HEK293 (cell line): ENCODE measurements at regions of chr12 and their contacts with region 1.

Region 1: DNA sequence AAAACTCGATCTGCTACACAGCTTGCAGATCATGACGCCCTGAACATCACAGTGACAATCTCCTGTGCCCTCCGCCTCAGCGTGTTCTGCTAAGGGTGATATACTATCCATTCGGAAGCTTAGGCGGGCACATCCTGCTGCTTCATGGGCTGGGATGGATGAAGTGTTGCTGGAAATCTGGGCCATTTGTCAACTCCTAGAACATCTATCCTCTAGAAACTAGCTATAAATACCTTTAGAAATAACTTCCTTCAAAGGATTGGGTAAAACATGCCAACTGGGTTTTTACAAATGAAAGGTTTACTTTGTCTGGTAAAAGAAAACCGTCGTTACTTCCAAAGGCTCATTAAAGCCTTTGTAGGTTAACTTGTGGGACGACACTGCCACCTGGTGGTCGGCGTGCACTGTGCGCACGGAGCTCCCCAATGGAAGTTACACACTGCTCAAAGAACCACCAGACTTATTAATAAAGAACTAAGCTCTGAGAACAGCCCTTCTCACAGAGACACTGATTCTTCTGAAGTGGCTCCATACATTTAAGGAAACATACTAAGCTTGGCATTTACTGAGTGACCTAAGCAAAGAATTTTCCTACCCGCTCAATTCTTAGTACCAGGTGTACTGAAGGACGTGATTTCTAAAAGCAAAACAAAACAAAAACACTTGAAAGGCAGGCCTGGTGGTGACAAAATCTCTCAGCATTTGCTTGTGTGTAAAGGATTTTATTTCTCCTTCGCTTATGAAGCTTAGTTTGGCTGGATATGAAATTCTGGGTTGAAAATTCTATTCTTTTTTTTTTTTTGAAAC is 21.6 kb upstream of the CACNA2D4 start:
- H3K4me3 ChIP-seq: no peak overlapping the region
- H3K27ac ChIP-seq: no peak overlapping the region
- H3K4me1 ChIP-seq: no peaks in the 10 kb centered on the region
- CTCF ChIP-seq: peak; percentile 74

Region 2: GRCh38 chr12:1650260-1650977 is 289.6 kb before region 1 on chr12:
- CTCF ChIA-PET with region 1: interaction called, 95 read pairs
- POLR2A ChIA-PET with region 1: interaction called, 3 read pairs
- H3K4me3 ChIP-seq: no peak overlapping the region
- H3K27ac ChIP-seq: no peak overlapping the region
- H3K4me1 ChIP-seq: no peaks in the 10 kb centered on the region
- CTCF ChIP-seq: no peak

Region 3: GRCh38 chr12:1795785-1796514 is 144.1 kb before region 1 on chr12:
- CTCF ChIA-PET with region 1: interaction called, 53 read pairs
- POLR2A ChIA-PET with region 1: interaction called, 6 read pairs
- H3K4me3 ChIP-seq: peak overlapping the region; percentile 22
- H3K27ac ChIP-seq: no peak overlapping the region
- H3K4me1 ChIP-seq: no peaks in the 10 kb centered on the region; the same call in 1 of the 2 replicates
- CTCF ChIP-seq: peak; percentile 79

Region 4: DNA sequence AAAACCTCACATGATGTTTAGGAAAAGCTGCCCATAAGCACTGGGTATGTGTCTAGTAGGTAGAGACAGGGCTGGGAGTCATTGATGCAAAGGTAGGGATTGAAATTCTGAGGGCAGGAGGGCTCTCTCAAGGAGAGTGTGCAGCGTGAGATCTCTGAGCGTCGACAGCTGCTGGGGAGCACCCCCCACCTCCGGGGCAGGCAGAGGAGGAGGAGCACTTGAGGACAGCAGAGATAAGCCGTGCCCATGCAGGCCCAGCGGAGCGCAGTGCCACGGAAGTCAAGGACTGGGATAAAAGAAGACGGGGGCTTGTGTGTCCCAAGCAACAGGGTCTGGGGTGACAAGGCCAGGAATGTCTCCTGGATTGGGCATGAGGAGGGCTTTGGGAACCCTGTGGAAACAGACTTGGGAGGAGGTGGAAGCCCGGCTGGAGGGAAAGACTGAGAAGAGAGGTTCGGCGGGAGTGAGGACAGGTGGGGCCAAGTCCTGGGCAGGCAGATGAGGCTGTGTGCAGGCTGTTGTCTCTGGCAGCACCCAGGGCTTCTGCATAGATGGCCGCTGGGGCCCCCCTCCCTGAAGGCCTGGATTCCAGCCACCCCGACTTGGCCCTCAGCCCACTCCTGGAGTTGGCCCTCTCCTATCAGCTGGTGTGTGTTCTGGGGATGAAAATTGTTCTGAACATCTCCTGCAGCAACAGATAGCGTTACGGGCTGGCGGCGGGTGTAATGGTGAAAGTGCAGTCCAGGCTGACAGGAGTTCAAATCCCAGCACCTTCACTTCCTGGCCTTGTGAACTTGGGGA is 23.4 kb before region 1 on chr12:
- CTCF ChIA-PET with region 1: interaction called, 16 read pairs
- POLR2A ChIA-PET with region 1: no interaction called
- H3K4me3 ChIP-seq: no peak overlapping the region
- H3K27ac ChIP-seq: no peak overlapping the region
- H3K4me1 ChIP-seq: no peaks in the 10 kb centered on the region
- CTCF ChIP-seq: no peak

Region 5: GRCh38 chr12:1956716-1957115 is 16.7 kb after region 1 on chr12:
- CTCF ChIA-PET with region 1: interaction called, 32 read pairs
- POLR2A ChIA-PET with region 1: no interaction called
- H3K4me3 ChIP-seq: no peak overlapping the region
- H3K27ac ChIP-seq: no peak overlapping the region
- H3K4me1 ChIP-seq: no peaks in the 10 kb centered on the region
- CTCF ChIP-seq: no peak

Region 6: GRCh38 chr12:2076196-2076570 is 136.2 kb after region 1 on chr12:
- CTCF ChIA-PET with region 1: no interaction called
- POLR2A ChIA-PET with region 1: no interaction called
- H3K4me3 ChIP-seq: no peak overlapping the region
- H3K27ac ChIP-seq: no peak overlapping the region
- H3K4me1 ChIP-seq: no peaks in the 10 kb centered on the region
- CTCF ChIP-seq: no peak